Posterior vena cava (tissue), 2 donors: ENCODE measurements at regions of chr15 and their contacts with region 1.

Region 1: GRCh38 chr15:94467034-94467433 is 235.7 kb downstream of the MCTP2 start:
- DNase-seq: no peak

Region 2: GRCh38 chr15:92603743-92604470 is 1863.1 kb before region 1 on chr15:
- intact Hi-C with region 1: loop called in 1 of 2 experiments (anchors 10 kb)
- DNase-seq: no peak

Region 3: GRCh38 chr15:94749811-94750617 is 283.0 kb after region 1 on chr15:
- intact Hi-C with region 1: no loop called
- DNase-seq: no peak